Brain microvascular endothelial cell (primary cell): ENCODE measurements at regions of chr15 and their contacts with region 1.

Region 1: DNA sequence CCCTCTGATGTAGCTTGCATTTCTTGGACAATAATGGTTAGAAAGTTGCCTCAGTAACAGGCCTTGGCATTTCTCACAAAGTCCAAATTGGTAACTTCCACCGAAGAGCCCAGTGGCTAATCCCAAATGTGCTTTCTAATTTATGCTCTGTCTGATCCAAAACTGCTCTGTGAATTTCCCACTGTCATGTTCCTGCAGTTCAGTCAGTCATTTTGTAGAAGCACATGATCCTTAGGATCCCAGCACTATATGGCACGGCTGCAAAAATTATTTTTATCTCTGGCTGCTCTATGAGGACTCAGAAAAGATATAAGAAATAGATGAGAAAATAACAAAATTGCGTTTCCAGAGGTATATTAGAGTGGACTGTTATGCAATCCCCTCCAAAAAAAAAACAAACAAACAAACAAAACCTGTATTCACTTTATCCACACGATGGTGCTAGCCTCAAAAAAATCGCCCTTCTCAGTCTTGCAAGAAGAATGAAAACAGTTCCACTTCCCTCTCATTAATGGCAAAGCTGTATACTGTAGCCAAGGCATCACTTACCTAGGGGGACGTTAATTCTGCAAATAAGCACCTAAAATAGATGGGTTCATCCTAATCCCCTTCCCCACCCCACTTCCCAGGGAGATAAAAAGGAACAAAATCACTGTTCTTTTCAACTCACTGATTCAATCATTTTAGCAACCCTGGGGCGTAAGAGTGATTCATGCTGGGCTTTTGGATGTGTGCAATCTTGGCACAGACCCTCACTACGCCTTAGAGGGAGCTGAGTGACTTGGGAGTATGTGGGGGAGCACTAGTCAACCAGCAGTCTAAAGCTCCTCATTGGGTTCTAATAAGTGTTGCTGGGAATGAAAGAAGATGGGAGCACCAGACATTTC is 61.3 kb downstream of the TMCO5A start:
- DNase-seq: peak; percentile 60
- H3K4me3 ChIP-seq: peak overlapping the region; percentile 30
- H3K27ac ChIP-seq: no peak overlapping the region
- H3K27me3 ChIP-seq: no peaks in the 10 kb centered on the region
- CTCF ChIP-seq: peak; percentile 59

Region 2: DNA sequence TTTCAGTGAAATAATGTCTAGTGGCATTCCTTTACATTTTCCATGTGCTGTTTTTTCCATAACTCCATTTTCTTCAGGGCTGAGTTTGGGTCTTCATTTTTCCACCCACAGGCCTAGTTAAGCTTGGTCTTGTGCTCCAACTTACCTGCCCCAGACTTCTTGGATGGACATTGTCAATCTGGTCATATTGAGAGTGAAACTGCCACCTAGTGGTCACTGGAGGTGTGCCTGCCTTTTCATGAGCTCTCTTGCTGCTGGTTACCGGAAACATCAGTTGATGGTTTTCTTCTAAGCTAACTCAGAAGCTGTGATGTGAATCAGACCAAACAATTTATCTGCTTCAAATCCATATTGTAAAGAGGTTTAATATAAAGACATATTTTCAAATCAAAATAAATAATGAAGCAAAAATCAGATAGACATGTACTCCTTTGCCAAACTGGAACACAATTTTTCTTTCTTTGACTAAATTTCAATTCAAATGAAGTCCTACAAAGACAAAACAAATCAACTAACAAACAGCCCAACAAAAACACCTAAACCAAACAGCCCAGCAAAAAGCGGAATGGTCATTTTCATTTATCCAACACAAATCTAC is 704.0 kb after region 1 on chr15:
- in situ Hi-C with region 1: loop called (anchors 25 kb)
- DNase-seq: peak; percentile 71
- H3K4me3 ChIP-seq: no peak overlapping the region
- H3K27ac ChIP-seq: no peak overlapping the region
- H3K27me3 ChIP-seq: no peaks in the 10 kb centered on the region
- CTCF ChIP-seq: peak; percentile 94